HCT116 (cell line): ENCODE measurements at regions of chrX and their contacts with region 1.

Region 1: GRCh38 chrX:38154818-38155217 is 65.9 kb downstream of the SRPX start:
- DNase-seq: no peak
- ATAC-seq: no peak
- H3K4me3 ChIP-seq: no peak overlapping the region
- H3K27ac ChIP-seq: no peak overlapping the region
- H3K4me1 ChIP-seq: no peaks in the 10 kb centered on the region
- H3K27me3 ChIP-seq: no peaks in the 10 kb centered on the region
- CTCF ChIP-seq: no peak
- POLR2A ChIP-seq: no peak
- RAD21 ChIP-seq: no peak

Region 2: GRCh38 chrX:38079463-38079862 is 75.4 kb before region 1 on chrX:
- CTCF ChIA-PET with region 1: no interaction called
- POLR2A ChIA-PET with region 1: no interaction called
- RAD21 ChIA-PET with region 1: no interaction called
- intact Hi-C with region 1: loop called (anchors 2 kb)
- DNase-seq: no peak
- ATAC-seq: no peak
- H3K4me3 ChIP-seq: no peak overlapping the region
- H3K27ac ChIP-seq: no peak overlapping the region
- H3K4me1 ChIP-seq: no peaks in the 10 kb centered on the region
- H3K27me3 ChIP-seq: no peaks in the 10 kb centered on the region
- CTCF ChIP-seq: no peak
- POLR2A ChIP-seq: no peak
- RAD21 ChIP-seq: no peak

Region 3: GRCh38 chrX:38561126-38561868 is 406.5 kb after region 1 on chrX and contains the start of gene TSPAN7:
- CTCF ChIA-PET with region 1: no interaction called
- POLR2A ChIA-PET with region 1: no interaction called
- RAD21 ChIA-PET with region 1: no interaction called
- intact Hi-C with region 1: no loop called
- DNase-seq: peak; percentile 28
- ATAC-seq: peak; percentile 96
- H3K4me3 ChIP-seq: peak within 1 kb of the TSS; percentile 37 to 52
- H3K27ac ChIP-seq: no peak within 1 kb of the TSS
- H3K4me1 ChIP-seq: peaks cover 3 to 5% of the 10 kb centered on the region in 2 experiments; a peak in 2 of 4 replicates
- H3K27me3 ChIP-seq: no peaks in the 10 kb centered on the region
- CTCF ChIP-seq: no peak
- POLR2A ChIP-seq: no peak
- RAD21 ChIP-seq: no peak
- total RNA-seq, gene TSPAN7: 2.9 TPM